ENCODE measurements at regions of chr1 and their contacts with region 1.

Region 1: GRCh38 chr1:18875107-18875795 is 15.8 kb upstream of the TAS1R2 start:
- DNase-seq: peak; percentile 78
- ATAC-seq: peak; percentile 70
- H3K4me3 Mint-ChIP-seq: no peak overlapping the region
- H3K27ac Mint-ChIP-seq: no peak overlapping the region
- H3K4me1 Mint-ChIP-seq: no peaks in the 10 kb centered on the region
- H3K27me3 Mint-ChIP-seq: no peaks in the 10 kb centered on the region

Region 2: DNA sequence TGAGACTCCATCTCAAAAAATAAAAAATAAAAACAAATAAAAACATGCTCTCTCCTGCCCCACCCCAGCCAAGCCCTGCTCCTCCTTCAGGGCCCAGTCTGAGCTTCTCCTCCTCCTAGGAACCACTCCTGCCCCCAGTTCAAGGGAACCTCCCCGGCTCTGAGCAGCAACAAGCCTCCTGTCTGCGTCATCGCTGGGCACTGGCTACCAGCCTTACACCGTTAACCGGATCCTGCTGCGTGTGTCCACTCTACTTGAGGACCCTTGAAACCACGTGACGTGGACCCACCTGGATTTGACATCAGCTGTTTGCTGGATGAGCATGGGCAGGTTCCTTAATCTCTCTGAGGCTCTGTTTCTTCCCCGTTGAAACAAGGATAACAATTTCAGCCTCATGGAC is 14.2 kb before region 1 on chr1:
- CTCF ChIA-PET with region 1: interaction called, 11 read pairs
- DNase-seq: no peak
- ATAC-seq: no peak
- H3K4me3 Mint-ChIP-seq: no peak overlapping the region
- H3K27ac Mint-ChIP-seq: no peak overlapping the region
- H3K4me1 Mint-ChIP-seq: no peaks in the 10 kb centered on the region
- H3K27me3 Mint-ChIP-seq: peaks cover under 1% of the 10 kb centered on the region

Measured in activated CD8-positive, alpha-beta memory T cell treated with anti-CD3 and anti-CD28 coated beads, Interleukin-2, amount 10 ng/mL, durations not matched to agents 7 days and 5 days (primary cell).